Calu3 (cell line): ENCODE measurements at regions of chr3 and their contacts with region 1.

Region 1: GRCh38 chr3:123347684-123348264 is 101.1 kb downstream of the ADCY5 start:
- DNase-seq: no peak
- H3K4me3 Mint-ChIP-seq: no peak overlapping the region
- H3K27ac Mint-ChIP-seq: no peak overlapping the region
- H3K4me1 Mint-ChIP-seq: no peaks in the 10 kb centered on the region
- H3K27me3 Mint-ChIP-seq: peaks cover 63% of the 10 kb centered on the region
- CTCF ChIP-seq: no peak

Region 2: GRCh38 chr3:123489400-123490004 is 141.7 kb after region 1 on chr3:
- CTCF ChIA-PET with region 1: no interaction called
- intact Hi-C with region 1: loop called (anchors 5 kb)
- DNase-seq: peak; percentile 78
- H3K4me3 Mint-ChIP-seq: no peak overlapping the region
- H3K27ac Mint-ChIP-seq: no peak overlapping the region
- H3K4me1 Mint-ChIP-seq: no peaks in the 10 kb centered on the region
- H3K27me3 Mint-ChIP-seq: no peaks in the 10 kb centered on the region
- CTCF ChIP-seq: peak; percentile 76